Heart right ventricle (tissue), 16 donors: ENCODE measurements at regions of chr11 and their contacts with region 1.

Region 1: GRCh38 chr11:2400069-2400760 is at the start of gene TSSC4:
- DNase-seq: peak; percentile 100
- ATAC-seq: peak; percentile 91 to 96 (median 93)
- H3K4me3 ChIP-seq: peak within 1 kb of the TSS; percentile 72 to 99 (median 92)
- H3K27ac ChIP-seq: peak within 1 kb of the TSS; percentile 96 to 100 (median 98)
- H3K4me1 ChIP-seq: peaks cover 19 to 32% (median 27%) of the 10 kb centered on the region in 9 donors
- H3K27me3 ChIP-seq: no peaks in the 10 kb centered on the region
- CTCF ChIP-seq: peak; percentile 94 to 100 (median 99)
- total RNA-seq, gene TSSC4: 22.0 to 46.4 (median 29.2) TPM

Region 2: GRCh38 chr11:2298795-2299761 is 101.1 kb before region 1 on chr11:
- intact Hi-C with region 1: loop called in 1 of 10 experiments (anchors 5 kb)
- DNase-seq: no peak
- ATAC-seq: no peak
- H3K4me3 ChIP-seq: no peak overlapping the region
- H3K27ac ChIP-seq: peak overlapping the region in 3 of 10 donors; percentile 25 to 40 (median 31)
- H3K4me1 ChIP-seq: peaks cover 0 to 56% (median 14%) of the 10 kb centered on the region in 9 donors
- H3K27me3 ChIP-seq: no peaks in the 10 kb centered on the region
- CTCF ChIP-seq: peak in 7 of 9 donors; percentile 28 to 51 (median 38)

Region 3: DNA sequence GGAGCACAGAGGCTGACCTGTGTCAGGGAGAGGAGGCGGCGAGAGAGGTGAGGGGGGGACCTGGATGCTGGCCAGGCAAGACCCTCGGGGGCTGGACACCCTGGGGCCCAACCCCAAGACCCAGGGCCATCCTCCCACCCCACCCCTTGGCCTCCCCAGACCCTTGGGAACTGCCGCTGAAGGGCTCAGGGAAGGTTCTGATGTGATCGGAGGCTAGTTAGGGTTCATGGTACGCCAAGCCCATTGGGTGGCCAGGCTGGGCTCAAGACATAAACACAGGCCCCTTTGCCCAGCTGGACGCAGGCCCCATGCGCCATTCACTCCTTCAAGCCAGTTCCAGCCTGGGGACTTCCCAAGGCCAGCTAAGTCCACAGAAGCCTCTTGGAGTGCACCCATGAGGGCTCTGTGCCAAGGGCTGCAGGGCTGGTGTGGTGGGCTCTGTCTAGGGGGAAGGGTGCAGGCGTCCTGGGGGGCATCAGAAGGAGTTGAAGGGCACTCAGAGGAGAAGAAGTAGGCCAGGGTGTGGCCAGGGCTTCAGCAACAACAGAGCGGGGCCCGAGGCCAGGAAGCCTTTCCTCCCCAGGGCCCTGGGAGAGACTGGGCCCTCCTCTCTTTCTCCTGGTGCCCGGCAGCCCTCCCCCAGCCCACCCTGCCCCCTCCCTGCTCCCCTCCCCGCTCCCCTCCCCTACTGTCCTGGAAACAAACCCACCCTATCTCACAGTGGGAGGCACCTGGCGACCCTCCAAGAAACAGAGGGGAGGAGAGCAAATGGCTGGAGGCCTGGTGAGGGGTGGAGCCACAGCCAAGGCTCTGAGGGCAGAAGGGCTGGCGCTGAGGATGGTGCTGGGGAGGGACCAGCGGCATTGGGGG is 85.5 kb before region 1 on chr11:
- intact Hi-C with region 1: loop called in 5 of 10 experiments (anchors 5 kb)
- DNase-seq: peak; percentile 91 to 95
- ATAC-seq: peak; percentile 78 to 91 (median 88)
- H3K4me3 ChIP-seq: peak overlapping the region in 6 of 10 donors; percentile 4 to 33 (median 22)
- H3K27ac ChIP-seq: peak overlapping the region; percentile 68 to 92 (median 86)
- H3K4me1 ChIP-seq: peaks cover 13 to 47% (median 31%) of the 10 kb centered on the region in 9 donors
- H3K27me3 ChIP-seq: no peaks in the 10 kb centered on the region
- CTCF ChIP-seq: no peak

Region 4: GRCh38 chr11:2420502-2421225 is 20.4 kb after region 1 on chr11:
- intact Hi-C with region 1: loop called in 1 of 10 experiments (anchors 1 kb)
- DNase-seq: peak; percentile 65 to 83
- ATAC-seq: peak; percentile 89 to 97 (median 94)
- H3K4me3 ChIP-seq: peak overlapping the region in 4 of 10 donors; percentile 3 to 27 (median 12)
- H3K27ac ChIP-seq: no peak overlapping the region
- H3K4me1 ChIP-seq: peaks cover 0 to 15% (median 9%) of the 10 kb centered on the region in 9 donors
- H3K27me3 ChIP-seq: peaks cover 0 to 18% (median 6%) of the 10 kb centered on the region in 7 donors
- CTCF ChIP-seq: peak; percentile 83 to 97 (median 95)